Tibial artery (tissue), 4 donors: ENCODE measurements at regions of chrX and their contacts with region 1.

Region 1: GRCh38 chrX:70454441-70455365 is 10.1 kb downstream of the DLG3 start:
- DNase-seq: peak; percentile 51 to 78
- H3K4me3 ChIP-seq: peak overlapping the region; percentile 56 to 63
- H3K27ac ChIP-seq: peak overlapping the region; percentile 89 to 91
- H3K4me1 ChIP-seq: peaks cover 0 to 28% (median 10%) of the 10 kb centered on the region in 4 donors
- H3K27me3 ChIP-seq: no peaks in the 10 kb centered on the region
- CTCF ChIP-seq: peak; percentile 68 to 82

Region 2: DNA sequence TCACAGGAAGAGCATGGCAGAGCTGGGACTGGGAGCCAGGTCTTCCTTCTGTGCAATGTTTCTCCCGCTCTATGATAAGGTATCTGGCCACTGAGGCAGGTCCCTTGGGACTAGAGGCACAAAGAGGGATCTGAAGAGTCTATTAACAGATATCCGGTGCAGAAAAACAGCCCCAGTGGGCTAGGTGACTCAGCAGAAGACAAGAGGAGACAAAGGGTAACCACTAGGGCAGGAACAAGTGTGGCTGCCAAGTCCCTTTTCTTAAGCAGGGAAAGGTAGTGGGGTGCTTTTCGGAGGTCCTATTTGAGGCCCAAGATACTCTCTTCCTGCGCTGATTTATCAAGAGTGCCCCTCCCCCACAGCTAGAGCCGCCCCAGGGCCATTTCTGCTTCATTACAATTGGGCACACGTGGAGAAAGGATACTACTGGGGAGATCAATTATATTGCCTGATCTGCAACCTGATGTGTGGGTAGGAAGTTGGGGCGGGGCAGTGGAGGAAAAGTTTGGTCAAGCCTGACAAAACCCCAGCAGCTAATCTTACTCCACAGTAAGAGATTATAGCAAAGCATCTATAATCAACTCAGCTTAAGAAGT is 277.7 kb before region 1 on chrX and contains the start of gene DGAT2L6:
- intact Hi-C with region 1: no loop called
- DNase-seq: no peak
- H3K4me3 ChIP-seq: no peak within 1 kb of the TSS
- H3K27ac ChIP-seq: no peak within 1 kb of the TSS
- H3K4me1 ChIP-seq: no peaks in the 10 kb centered on the region
- H3K27me3 ChIP-seq: no peaks in the 10 kb centered on the region
- CTCF ChIP-seq: no peak

Region 3: GRCh38 chrX:70494441-70494840 is 39.7 kb after region 1 on chrX:
- intact Hi-C with region 1: no loop called
- DNase-seq: no peak
- H3K4me3 ChIP-seq: no peak overlapping the region
- H3K27ac ChIP-seq: no peak overlapping the region
- H3K4me1 ChIP-seq: no peaks in the 10 kb centered on the region
- H3K27me3 ChIP-seq: no peaks in the 10 kb centered on the region
- CTCF ChIP-seq: no peak

Region 4: GRCh38 chrX:70554081-70554480 is 99.4 kb after region 1 on chrX:
- intact Hi-C with region 1: loop called (anchors 10 kb)
- DNase-seq: no peak
- H3K4me3 ChIP-seq: no peak overlapping the region
- H3K27ac ChIP-seq: no peak overlapping the region
- H3K4me1 ChIP-seq: no peaks in the 10 kb centered on the region
- H3K27me3 ChIP-seq: no peaks in the 10 kb centered on the region
- CTCF ChIP-seq: peak in 1 of 2 experiments; percentile 19